Sciatic nerve (tissue), 2 donors: ENCODE measurements at regions of chrX and their contacts with region 1.

Region 1: DNA sequence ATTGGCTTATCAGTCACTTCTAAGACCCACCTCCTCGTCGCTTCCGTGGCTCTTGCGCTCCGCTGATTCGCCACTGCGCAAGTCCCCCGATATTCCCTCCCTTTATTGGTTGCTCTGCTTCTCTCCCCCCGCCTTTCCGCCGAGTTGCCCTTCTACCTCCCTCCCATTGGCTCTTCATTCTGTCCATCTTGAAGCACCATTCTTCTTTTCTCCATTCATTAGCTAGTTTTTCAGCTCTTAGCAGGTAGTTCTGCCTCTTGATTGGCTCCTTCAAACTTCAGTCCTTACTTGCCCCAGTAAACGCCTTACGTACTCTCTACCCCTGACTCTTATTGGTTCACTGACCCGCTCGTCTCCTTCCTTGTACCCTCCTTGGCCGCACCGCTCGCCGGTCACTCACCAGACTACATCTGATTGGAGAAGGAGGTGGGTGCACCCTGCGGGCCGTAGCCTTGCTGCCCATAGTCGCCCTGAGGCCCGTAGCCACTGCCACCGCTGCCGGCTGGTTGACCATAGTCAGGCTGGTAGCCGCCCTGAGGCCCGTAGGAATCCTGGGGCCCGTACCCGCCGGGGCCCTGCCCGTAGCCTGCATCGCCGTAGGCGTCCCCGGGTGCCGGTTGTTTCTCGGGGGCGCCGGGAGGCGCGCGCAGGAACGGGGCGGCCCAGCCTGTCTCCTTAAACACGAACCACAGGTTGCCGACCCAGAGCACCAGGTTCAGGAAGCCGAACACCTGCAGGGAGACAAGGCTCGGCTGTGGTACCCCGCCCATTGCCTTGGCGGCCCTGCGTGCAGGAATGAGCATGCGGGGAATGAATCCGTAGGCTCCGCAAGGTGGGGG is 5.1 kb upstream of the PRICKLE3 start:
- DNase-seq: peak; percentile 91
- ATAC-seq: peak; percentile 95

Region 2: DNA sequence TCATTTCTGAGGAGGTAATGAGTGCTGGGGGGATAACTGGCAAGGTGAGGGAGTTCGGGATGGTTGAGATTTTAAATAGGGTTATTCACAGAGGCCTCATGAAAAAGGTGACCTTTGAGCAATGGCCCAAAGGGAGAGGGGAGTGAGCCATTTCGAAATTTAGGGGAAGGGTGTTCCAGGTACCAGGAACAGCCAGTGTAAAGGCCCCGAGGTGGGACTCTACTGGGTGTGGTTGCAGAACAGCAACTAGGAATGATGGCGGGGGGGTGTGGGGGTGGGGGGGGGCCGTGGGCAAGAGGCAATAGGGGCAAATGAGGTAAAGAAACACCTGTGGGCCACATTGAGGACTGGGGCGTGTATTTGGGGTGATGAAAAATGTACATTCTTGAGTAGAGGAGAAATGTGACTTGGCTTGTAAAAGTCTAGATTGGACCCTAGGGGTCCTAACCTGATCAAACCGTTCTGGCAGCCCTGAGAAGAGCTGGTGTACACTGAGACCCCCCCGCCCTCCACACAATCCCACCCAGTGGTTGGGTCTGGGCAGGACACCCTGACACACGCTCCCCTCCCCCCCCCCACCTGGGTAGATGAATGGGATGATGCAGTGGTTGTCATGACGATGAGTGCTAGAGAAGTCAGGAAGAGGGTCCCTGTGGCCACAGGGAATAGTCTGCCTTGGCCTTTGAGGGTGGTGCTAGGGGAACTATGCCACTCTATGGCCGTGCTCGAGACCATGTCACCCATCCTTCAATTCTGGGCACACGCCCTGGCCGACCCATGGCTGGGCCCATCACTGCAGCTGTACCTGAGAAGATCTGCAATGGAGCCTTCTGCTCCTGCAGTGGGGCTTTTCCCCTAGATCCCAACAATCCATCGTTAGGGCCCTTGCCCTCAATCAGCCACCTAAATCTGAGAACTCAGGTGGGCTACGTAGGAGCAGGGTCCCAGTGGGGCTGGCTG is 1968.6 kb before region 1 on chrX:
- intact Hi-C with region 1: loop called (anchors 10 kb)
- DNase-seq: no peak
- ATAC-seq: no peak